ENCODE measurements at regions of chr9 and their contacts with region 1.

Region 1: GRCh38 chr9:121350993-121351561 is 19.0 kb downstream of the STOM start:
- DNase-seq: no peak
- H3K4me3 Mint-ChIP-seq: no peak overlapping the region
- H3K27ac Mint-ChIP-seq: no peak overlapping the region
- H3K4me1 Mint-ChIP-seq: peaks cover 46% of the 10 kb centered on the region
- H3K27me3 Mint-ChIP-seq: no peaks in the 10 kb centered on the region

Region 2: GRCh38 chr9:120692901-120693699 is 658.0 kb before region 1 on chr9:
- intact Hi-C with region 1: loop called (anchors 5 kb)
- DNase-seq: no peak
- H3K4me3 Mint-ChIP-seq: no peak overlapping the region
- H3K27ac Mint-ChIP-seq: no peak overlapping the region
- H3K4me1 Mint-ChIP-seq: peaks cover 38% of the 10 kb centered on the region
- H3K27me3 Mint-ChIP-seq: no peaks in the 10 kb centered on the region

Region 3: GRCh38 chr9:121261107-121261460 is 90.0 kb before region 1 on chr9:
- intact Hi-C with region 1: no loop called
- DNase-seq: no peak
- H3K4me3 Mint-ChIP-seq: no peak overlapping the region
- H3K27ac Mint-ChIP-seq: no peak overlapping the region
- H3K4me1 Mint-ChIP-seq: no peaks in the 10 kb centered on the region
- H3K27me3 Mint-ChIP-seq: peaks cover 38% of the 10 kb centered on the region

Region 4: GRCh38 chr9:121369595-121370265 is 18.7 kb after region 1 on chr9 and contains the start of gene STOM:
- intact Hi-C with region 1: loop called (anchors 1 kb)
- DNase-seq: no peak
- H3K4me3 Mint-ChIP-seq: peak within 1 kb of the TSS; percentile 87
- H3K27ac Mint-ChIP-seq: peak within 1 kb of the TSS; percentile 96
- H3K4me1 Mint-ChIP-seq: peaks cover 77% of the 10 kb centered on the region
- H3K27me3 Mint-ChIP-seq: no peaks in the 10 kb centered on the region
- total RNA-seq, gene STOM: 51.1 and 51.7 TPM in 2 replicates

Region 5: GRCh38 chr9:121455527-121456239 is 104.6 kb after region 1 on chr9:
- intact Hi-C with region 1: loop called (anchors 1 kb)
- DNase-seq: peak; percentile 24
- H3K4me3 Mint-ChIP-seq: peak overlapping the region; percentile 46
- H3K27ac Mint-ChIP-seq: peak overlapping the region; percentile 37
- H3K4me1 Mint-ChIP-seq: peaks cover 30% of the 10 kb centered on the region
- H3K27me3 Mint-ChIP-seq: peaks cover 25% of the 10 kb centered on the region

Region 6: GRCh38 chr9:121609845-121610570 is 258.9 kb after region 1 on chr9:
- intact Hi-C with region 1: no loop called
- DNase-seq: no peak
- H3K4me3 Mint-ChIP-seq: no peak overlapping the region
- H3K27ac Mint-ChIP-seq: no peak overlapping the region
- H3K4me1 Mint-ChIP-seq: peaks cover 6% of the 10 kb centered on the region
- H3K27me3 Mint-ChIP-seq: peaks cover 46% of the 10 kb centered on the region

Region 7: DNA sequence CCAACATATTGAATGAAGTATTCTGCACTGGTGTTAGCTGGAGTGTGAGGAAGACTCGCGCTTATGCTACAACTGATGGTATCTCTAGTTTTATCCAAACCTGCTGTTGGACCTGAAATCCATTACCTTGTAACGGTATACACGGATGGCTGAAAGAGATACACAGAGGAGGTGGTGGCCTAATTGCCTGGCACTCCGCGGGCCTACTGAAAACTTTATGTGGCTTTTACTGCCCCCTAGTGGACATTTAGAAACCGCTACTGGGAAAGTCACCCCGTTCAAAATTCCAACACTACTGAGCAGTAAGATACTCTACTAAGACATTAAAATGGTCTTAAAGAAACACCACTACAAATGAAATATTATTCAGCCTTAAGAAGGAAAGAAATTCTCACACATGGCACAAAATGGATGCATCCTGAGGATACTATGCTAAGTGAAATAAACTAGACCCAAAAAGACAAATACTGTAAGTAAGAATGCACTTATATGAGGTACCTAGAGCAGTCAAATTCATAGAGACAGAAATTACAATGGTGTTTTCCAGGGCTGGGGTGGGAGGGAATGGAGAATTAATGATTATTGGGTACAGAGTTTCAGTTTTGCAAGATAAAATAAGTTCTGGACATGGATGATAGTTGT is 641.6 kb after region 1 on chr9:
- intact Hi-C with region 1: no loop called
- DNase-seq: peak; percentile 32
- H3K4me3 Mint-ChIP-seq: no peak overlapping the region
- H3K27ac Mint-ChIP-seq: no peak overlapping the region
- H3K4me1 Mint-ChIP-seq: no peaks in the 10 kb centered on the region
- H3K27me3 Mint-ChIP-seq: peaks cover 2% of the 10 kb centered on the region